ENCODE measurements at regions of chr11 and their contacts with region 1.

Region 1: GRCh38 chr11:102306048-102306585 is 11.2 kb upstream of the BIRC3 start:
- DNase-seq: peak; percentile 96
- H3K4me3 ChIP-seq: peak overlapping the region; percentile 5 to 21 (median 15)
- H3K27ac ChIP-seq: peak overlapping the region; percentile 98
- H3K4me1 ChIP-seq: peaks cover 28% of the 10 kb centered on the region
- H3K27me3 ChIP-seq: no peaks in the 10 kb centered on the region
- CTCF ChIP-seq: peak in 1 of 2 donors; percentile 39

Region 2: GRCh38 chr11:102147015-102147414 is 159.1 kb before region 1 on chr11:
- CTCF ChIA-PET with region 1: interaction called, 20 read pairs
- dilution Hi-C with region 1: no loop called
- in situ Hi-C with region 1: no loop called
- intact Hi-C with region 1: no loop called
- DNase-seq: no peak
- H3K4me3 ChIP-seq: no peak overlapping the region
- H3K27ac ChIP-seq: no peak overlapping the region
- H3K4me1 ChIP-seq: peaks cover 6% of the 10 kb centered on the region
- H3K27me3 ChIP-seq: no peaks in the 10 kb centered on the region
- CTCF ChIP-seq: no peak

Region 3: GRCh38 chr11:102293873-102294601 is 12.1 kb before region 1 on chr11:
- CTCF ChIA-PET with region 1: interaction called, 5 read pairs
- dilution Hi-C with region 1: no loop called
- in situ Hi-C with region 1: no loop called
- intact Hi-C with region 1: loop called (anchors 1 kb)
- DNase-seq: peak; percentile 50
- H3K4me3 ChIP-seq: no peak overlapping the region
- H3K27ac ChIP-seq: no peak overlapping the region
- H3K4me1 ChIP-seq: peaks cover 7% of the 10 kb centered on the region
- H3K27me3 ChIP-seq: no peaks in the 10 kb centered on the region
- CTCF ChIP-seq: peak; percentile 80 to 87

Region 4: GRCh38 chr11:102317099-102317767 is 11.1 kb after region 1 on chr11 and contains the start of gene BIRC3:
- CTCF ChIA-PET with region 1: no interaction called
- dilution Hi-C with region 1: no loop called
- in situ Hi-C with region 1: no loop called
- intact Hi-C with region 1: loop called (anchors 1 kb)
- DNase-seq: peak; percentile 99
- H3K4me3 ChIP-seq: peak within 1 kb of the TSS; percentile 35 to 56 (median 50)
- H3K27ac ChIP-seq: peak within 1 kb of the TSS; percentile 98
- H3K4me1 ChIP-seq: peaks cover 39% of the 10 kb centered on the region
- H3K27me3 ChIP-seq: no peaks in the 10 kb centered on the region
- CTCF ChIP-seq: peak in 1 of 2 donors; percentile 43
- total RNA-seq, gene BIRC3: 0.83 to 17.5 TPM

Region 5: GRCh38 chr11:102346748-102347461 is 40.8 kb after region 1 on chr11 and contains the start of gene BIRC2:
- CTCF ChIA-PET with region 1: no interaction called
- dilution Hi-C with region 1: loop called (anchors 5 kb)
- in situ Hi-C with region 1: no loop called
- intact Hi-C with region 1: loop called (anchors 1 kb)
- DNase-seq: peak; percentile 94
- H3K4me3 ChIP-seq: peak within 1 kb of the TSS; percentile 65 to 81 (median 80)
- H3K27ac ChIP-seq: peak within 1 kb of the TSS; percentile 88
- H3K4me1 ChIP-seq: peaks cover 23% of the 10 kb centered on the region
- H3K27me3 ChIP-seq: no peaks in the 10 kb centered on the region
- CTCF ChIP-seq: peak; percentile 52 to 83
- total RNA-seq, gene BIRC2: 59.4 to 78.2 TPM

Region 6: GRCh38 chr11:102410382-102410784 is 104.3 kb after region 1 on chr11:
- CTCF ChIA-PET with region 1: no interaction called
- dilution Hi-C with region 1: no loop called
- in situ Hi-C with region 1: no loop called
- intact Hi-C with region 1: no loop called
- DNase-seq: no peak
- H3K4me3 ChIP-seq: no peak overlapping the region
- H3K27ac ChIP-seq: no peak overlapping the region
- H3K4me1 ChIP-seq: peaks cover 4% of the 10 kb centered on the region
- H3K27me3 ChIP-seq: no peaks in the 10 kb centered on the region
- CTCF ChIP-seq: no peak